MCF 10A (cell line): ENCODE measurements at regions of chr1 and their contacts with region 1.

Region 1: GRCh38 chr1:225766967-225767633 is 10.5 kb upstream of the SRP9 start:
- DNase-seq: peak; percentile 99
- H3K4me3 Mint-ChIP-seq: peak overlapping the region; percentile 40
- H3K27ac Mint-ChIP-seq: peak overlapping the region; percentile 78
- H3K4me1 Mint-ChIP-seq: peaks cover 38% of the 10 kb centered on the region
- H3K27me3 Mint-ChIP-seq: no peaks in the 10 kb centered on the region
- CTCF ChIP-seq: no peak

Region 2: DNA sequence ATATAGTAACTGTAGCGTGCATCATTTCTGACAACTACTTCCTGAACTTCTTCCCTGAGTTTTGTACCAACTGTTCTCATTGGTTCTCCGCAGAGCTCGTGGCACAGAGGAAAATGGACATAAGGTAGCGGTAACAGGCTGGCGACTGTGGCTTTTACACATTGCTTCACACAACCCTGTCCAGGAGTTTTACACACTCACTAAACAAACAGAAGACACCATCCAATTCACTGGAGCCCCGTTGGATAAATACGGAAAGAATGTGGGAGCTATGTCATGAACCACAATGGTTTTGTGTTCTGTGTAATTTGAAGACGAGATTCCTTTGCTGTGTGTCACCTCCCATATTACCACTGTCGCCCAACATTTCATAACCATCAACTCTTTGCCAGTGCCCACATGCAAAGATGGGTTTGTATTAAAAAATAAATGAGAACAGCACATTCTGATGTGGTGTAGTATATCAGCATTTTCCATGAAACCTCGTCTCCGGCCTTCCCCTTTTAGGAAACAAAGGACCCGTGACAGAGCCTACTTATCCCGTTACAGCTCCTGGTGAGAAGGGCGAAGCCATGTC is 66.8 kb before region 1 on chr1:
- CTCF ChIA-PET with region 1: interaction called, 50 read pairs
- POLR2A ChIA-PET with region 1: interaction called, 10 read pairs
- intact Hi-C with region 1: loop called (anchors 5 kb)
- DNase-seq: peak; percentile 100
- H3K4me3 Mint-ChIP-seq: peak overlapping the region; percentile 68
- H3K27ac Mint-ChIP-seq: peak overlapping the region; percentile 94
- H3K4me1 Mint-ChIP-seq: peaks cover 26% of the 10 kb centered on the region
- H3K27me3 Mint-ChIP-seq: no peaks in the 10 kb centered on the region
- CTCF ChIP-seq: no peak

Region 3: GRCh38 chr1:225746361-225747179 is 20.5 kb before region 1 on chr1:
- CTCF ChIA-PET with region 1: interaction called, 50 read pairs
- POLR2A ChIA-PET with region 1: interaction called, 230 read pairs
- intact Hi-C with region 1: no loop called
- DNase-seq: peak; percentile 98
- H3K4me3 Mint-ChIP-seq: peak overlapping the region; percentile 66
- H3K27ac Mint-ChIP-seq: peak overlapping the region; percentile 90
- H3K4me1 Mint-ChIP-seq: peaks cover 35% of the 10 kb centered on the region
- H3K27me3 Mint-ChIP-seq: no peaks in the 10 kb centered on the region
- CTCF ChIP-seq: no peak

Region 4: DNA sequence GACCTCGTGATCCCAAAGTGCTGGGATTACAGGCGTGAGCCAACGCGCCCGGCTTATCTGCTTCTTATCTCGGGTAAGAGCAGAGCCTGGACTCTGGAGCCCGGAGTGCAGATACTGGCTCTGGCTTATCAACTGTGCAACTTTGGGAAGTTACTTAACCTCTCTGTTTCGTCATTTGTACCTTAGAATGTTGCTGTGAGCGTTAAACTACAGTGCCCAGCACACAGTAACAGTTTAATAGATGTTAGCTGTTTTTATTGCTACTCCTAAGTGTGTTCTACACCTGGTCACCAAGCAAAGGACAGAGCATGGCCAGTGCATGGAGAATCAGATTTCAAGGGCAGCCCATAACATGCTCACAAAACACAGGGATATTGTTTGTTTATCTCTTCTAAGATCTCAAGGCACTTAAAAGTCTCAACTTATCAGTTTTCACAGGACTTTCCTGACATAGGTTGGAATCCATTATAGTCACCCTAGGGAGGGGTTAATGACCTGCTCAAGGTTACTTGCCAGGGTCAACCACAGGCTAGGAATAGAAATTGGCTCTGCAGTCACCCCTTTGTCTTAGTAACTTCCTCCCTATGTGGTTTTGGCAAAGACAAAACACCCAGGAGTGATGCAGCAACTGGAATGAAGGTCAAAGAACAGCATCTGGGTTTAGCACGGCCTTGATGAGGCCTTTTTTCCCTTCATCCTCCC is 12.0 kb before region 1 on chr1:
- CTCF ChIA-PET with region 1: interaction called, 27 read pairs
- POLR2A ChIA-PET with region 1: interaction called, 82 read pairs
- intact Hi-C with region 1: no loop called
- DNase-seq: peak; percentile 93
- H3K4me3 Mint-ChIP-seq: no peak overlapping the region
- H3K27ac Mint-ChIP-seq: no peak overlapping the region
- H3K4me1 Mint-ChIP-seq: peaks cover 19% of the 10 kb centered on the region
- H3K27me3 Mint-ChIP-seq: no peaks in the 10 kb centered on the region
- CTCF ChIP-seq: no peak

Region 5: DNA sequence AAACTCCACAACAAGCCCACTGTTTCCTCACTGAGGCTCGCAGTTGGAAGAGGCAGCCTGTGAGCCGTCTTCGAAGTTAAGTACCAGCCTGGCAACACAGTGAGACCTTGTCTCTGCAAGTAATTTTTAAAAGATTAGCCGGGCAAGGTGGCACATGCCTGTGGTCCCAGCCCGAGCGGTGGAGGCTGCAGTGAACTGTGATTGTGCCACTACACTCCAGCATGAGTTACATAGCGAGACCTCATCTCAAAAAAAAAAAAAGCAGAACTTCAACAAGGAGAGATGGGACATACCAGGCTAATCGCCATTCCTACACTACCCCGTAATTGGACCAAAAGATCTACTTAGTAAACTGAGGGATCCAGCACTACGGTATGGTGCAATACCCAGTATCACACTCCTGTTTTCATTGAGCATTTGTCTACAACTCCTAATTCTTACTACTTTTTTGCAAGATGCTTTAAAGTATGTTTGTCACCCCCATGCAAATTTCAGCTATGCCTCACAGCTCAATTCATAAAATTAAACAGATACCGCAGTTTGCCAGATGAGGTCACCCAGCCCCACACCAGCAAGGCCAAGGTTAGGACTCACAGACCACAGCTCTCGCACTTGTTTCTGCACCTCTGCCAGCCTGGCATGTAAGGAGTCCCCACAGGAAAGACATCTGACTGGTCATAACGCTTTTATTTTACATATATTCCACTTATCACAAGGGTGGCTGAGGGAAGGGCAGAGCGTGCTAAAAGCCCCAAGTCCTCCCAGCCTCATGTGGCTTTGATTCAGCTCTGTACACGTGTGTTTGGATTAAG is 211.0 kb after region 1 on chr1:
- CTCF ChIA-PET with region 1: interaction called, 119 read pairs
- POLR2A ChIA-PET with region 1: interaction called, 3 read pairs
- intact Hi-C with region 1: loop called (anchors 1 kb)
- DNase-seq: no peak
- H3K4me3 Mint-ChIP-seq: no peak overlapping the region
- H3K27ac Mint-ChIP-seq: no peak overlapping the region
- H3K4me1 Mint-ChIP-seq: peaks cover 5% of the 10 kb centered on the region
- H3K27me3 Mint-ChIP-seq: no peaks in the 10 kb centered on the region
- CTCF ChIP-seq: no peak